GM23248 (cell line): ENCODE measurements at regions of chr2 and their contacts with region 1.

Region 1: GRCh38 chr2:189798312-189799029 is 14.2 kb downstream of the PMS1 start:
- DNase-seq: peak; percentile 69
- H3K4me3 ChIP-seq: no peak overlapping the region
- H3K27ac ChIP-seq: peak overlapping the region; percentile 13; the same call in 1 of the 2 replicates
- H3K4me1 ChIP-seq: peaks cover 19% of the 10 kb centered on the region
- H3K27me3 ChIP-seq: no peaks in the 10 kb centered on the region

Region 2: GRCh38 chr2:190069936-190070696 is 271.6 kb after region 1 on chr2:
- in situ Hi-C with region 1: loop called (anchors 5 kb)
- DNase-seq: peak; percentile 77
- H3K4me3 ChIP-seq: no peak overlapping the region
- H3K27ac ChIP-seq: no peak overlapping the region
- H3K4me1 ChIP-seq: no peaks in the 10 kb centered on the region
- H3K27me3 ChIP-seq: no peaks in the 10 kb centered on the region